ENCODE measurements at regions of chr1 and their contacts with region 1.

Region 1: GRCh38 chr1:211680752-211681327 is 5.4 kb upstream of the NEK2 start:
- DNase-seq: peak; percentile 45 to 93 (median 74)
- ATAC-seq: peak; percentile 93
- H3K4me3 ChIP-seq: no peak overlapping the region
- H3K4me3 Mint-ChIP-seq: no peak overlapping the region
- H3K27ac ChIP-seq: peak overlapping the region; percentile 18 to 85
- H3K27ac Mint-ChIP-seq: peak overlapping the region; percentile 94
- H3K4me1 ChIP-seq: peaks cover 8% of the 10 kb centered on the region
- H3K4me1 Mint-ChIP-seq: peaks cover 19% of the 10 kb centered on the region
- H3K27me3 ChIP-seq: no peaks in the 10 kb centered on the region
- H3K27me3 Mint-ChIP-seq: no peaks in the 10 kb centered on the region
- CTCF ChIP-seq: peak; percentile 88

Region 2: GRCh38 chr1:211698161-211699026 is 17.6 kb after region 1 on chr1:
- CTCF ChIA-PET with region 1: interaction called, 65 read pairs
- POLR2A ChIA-PET with region 1: interaction called, 8 read pairs
- intact Hi-C with region 1: loop called (anchors 1 to 2 kb)
- DNase-seq: peak; percentile 70 to 90 (median 82)
- ATAC-seq: peak; percentile 96
- H3K4me3 ChIP-seq: peak overlapping the region; percentile 18 to 34
- H3K4me3 Mint-ChIP-seq: peak overlapping the region; percentile 76
- H3K27ac ChIP-seq: no peak overlapping the region
- H3K27ac Mint-ChIP-seq: no peak overlapping the region
- H3K4me1 ChIP-seq: peaks cover 30% of the 10 kb centered on the region
- H3K4me1 Mint-ChIP-seq: peaks cover 42% of the 10 kb centered on the region
- H3K27me3 ChIP-seq: no peaks in the 10 kb centered on the region
- H3K27me3 Mint-ChIP-seq: no peaks in the 10 kb centered on the region
- CTCF ChIP-seq: peak; percentile 99

Region 3: DNA sequence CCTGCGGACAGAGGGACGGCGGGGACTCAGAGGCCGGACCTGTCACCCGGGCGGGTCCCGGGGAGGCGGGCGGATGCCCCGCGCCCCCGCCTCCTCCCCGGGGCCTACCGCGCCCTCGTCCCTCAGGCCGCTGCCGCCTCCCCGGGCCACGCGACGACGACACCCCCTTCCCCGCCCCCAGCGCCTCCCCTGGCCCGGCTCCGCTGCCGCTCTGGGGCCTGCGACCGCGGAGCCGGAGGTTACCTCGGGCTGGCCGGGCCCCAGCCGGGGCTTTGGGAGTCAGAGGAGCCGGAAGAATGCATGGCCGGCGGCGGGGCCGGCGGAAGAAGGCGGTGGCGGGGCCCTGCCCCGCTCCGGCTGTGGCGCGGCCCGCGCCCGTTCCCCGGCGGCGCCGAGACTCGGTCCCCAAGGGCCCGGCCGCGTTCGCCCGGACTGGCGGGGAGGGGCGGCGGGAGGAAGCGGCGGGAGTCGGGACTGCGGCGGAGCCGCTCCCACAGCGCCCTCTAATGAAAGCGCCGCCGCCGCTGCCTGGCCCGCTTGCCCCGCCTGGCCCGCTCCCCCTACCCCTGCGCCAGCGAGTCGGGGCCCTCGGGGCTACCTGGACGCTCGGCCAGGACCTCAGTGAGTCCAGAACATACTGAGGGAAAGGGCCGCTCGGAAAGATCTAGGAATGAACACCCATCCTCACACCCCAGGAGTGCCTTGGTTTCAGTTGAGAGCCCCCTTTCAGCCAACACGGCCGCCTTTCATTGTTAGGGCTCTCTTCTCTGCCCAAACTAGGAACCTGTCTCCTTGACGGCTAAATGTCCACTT is 149.7 kb after region 1 on chr1 and contains the start of gene LPGAT1:
- CTCF ChIA-PET with region 1: interaction called, 5 read pairs
- POLR2A ChIA-PET with region 1: no interaction called
- intact Hi-C with region 1: loop called (anchors 1 to 5 kb)
- DNase-seq: peak; percentile 37 to 84 (median 71)
- ATAC-seq: peak; percentile 79
- H3K4me3 ChIP-seq: peak within 1 kb of the TSS; percentile 69 to 75
- H3K4me3 Mint-ChIP-seq: peak within 1 kb of the TSS; percentile 90
- H3K27ac ChIP-seq: peak within 1 kb of the TSS; percentile 50 to 78
- H3K27ac Mint-ChIP-seq: peak within 1 kb of the TSS; percentile 92
- H3K4me1 ChIP-seq: peaks cover 44% of the 10 kb centered on the region
- H3K4me1 Mint-ChIP-seq: peaks cover 64% of the 10 kb centered on the region
- H3K27me3 ChIP-seq: no peaks in the 10 kb centered on the region
- H3K27me3 Mint-ChIP-seq: no peaks in the 10 kb centered on the region
- CTCF ChIP-seq: peak; percentile 51
- total RNA-seq, gene LPGAT1: 17.9 to 19.1 TPM

Region 4: GRCh38 chr1:212012034-212012740 is 331.3 kb after region 1 on chr1:
- CTCF ChIA-PET with region 1: interaction called, 14 read pairs
- POLR2A ChIA-PET with region 1: no interaction called
- intact Hi-C with region 1: loop called (anchors 1 kb)
- DNase-seq: peak; percentile 24 to 78 (median 61)
- ATAC-seq: peak; percentile 100
- H3K4me3 ChIP-seq: no peak overlapping the region
- H3K4me3 Mint-ChIP-seq: no peak overlapping the region
- H3K27ac ChIP-seq: no peak overlapping the region
- H3K27ac Mint-ChIP-seq: no peak overlapping the region
- H3K4me1 ChIP-seq: no peaks in the 10 kb centered on the region
- H3K4me1 Mint-ChIP-seq: peaks cover 2% of the 10 kb centered on the region
- H3K27me3 ChIP-seq: no peaks in the 10 kb centered on the region
- H3K27me3 Mint-ChIP-seq: no peaks in the 10 kb centered on the region
- CTCF ChIP-seq: peak; percentile 98

Region 5: GRCh38 chr1:212062832-212063438 is 382.1 kb after region 1 on chr1:
- CTCF ChIA-PET with region 1: interaction called, 10 read pairs
- POLR2A ChIA-PET with region 1: interaction called, 3 read pairs
- intact Hi-C with region 1: no loop called
- DNase-seq: peak in 2 of 9 experiments; percentile 39 to 59
- ATAC-seq: peak; percentile 62
- H3K4me3 ChIP-seq: no peak overlapping the region
- H3K4me3 Mint-ChIP-seq: no peak overlapping the region
- H3K27ac ChIP-seq: no peak overlapping the region
- H3K27ac Mint-ChIP-seq: no peak overlapping the region
- H3K4me1 ChIP-seq: no peaks in the 10 kb centered on the region
- H3K4me1 Mint-ChIP-seq: no peaks in the 10 kb centered on the region
- H3K27me3 ChIP-seq: no peaks in the 10 kb centered on the region
- H3K27me3 Mint-ChIP-seq: no peaks in the 10 kb centered on the region
- CTCF ChIP-seq: peak; percentile 74

Region 6: GRCh38 chr1:212291505-212292134 is 610.8 kb after region 1 on chr1:
- CTCF ChIA-PET with region 1: interaction called, 5 read pairs
- POLR2A ChIA-PET with region 1: interaction called, 8 read pairs
- intact Hi-C with region 1: loop called (anchors 2 to 5 kb)
- DNase-seq: peak in 2 of 9 experiments; percentile 71 to 81
- ATAC-seq: peak; percentile 73
- H3K4me3 ChIP-seq: no peak overlapping the region
- H3K4me3 Mint-ChIP-seq: peak overlapping the region; percentile 38
- H3K27ac ChIP-seq: no peak overlapping the region
- H3K27ac Mint-ChIP-seq: peak overlapping the region; percentile 16
- H3K4me1 ChIP-seq: peaks cover 63% of the 10 kb centered on the region
- H3K4me1 Mint-ChIP-seq: peaks cover 87% of the 10 kb centered on the region
- H3K27me3 ChIP-seq: no peaks in the 10 kb centered on the region
- H3K27me3 Mint-ChIP-seq: no peaks in the 10 kb centered on the region
- CTCF ChIP-seq: peak; percentile 73

Region 7: GRCh38 chr1:212368073-212368484 is 687.2 kb after region 1 on chr1:
- CTCF ChIA-PET with region 1: interaction called, 5 read pairs
- POLR2A ChIA-PET with region 1: no interaction called
- intact Hi-C with region 1: loop called (anchors 2 to 5 kb)
- DNase-seq: peak; percentile 16 to 78 (median 53)
- ATAC-seq: peak; percentile 92
- H3K4me3 ChIP-seq: no peak overlapping the region
- H3K4me3 Mint-ChIP-seq: no peak overlapping the region
- H3K27ac ChIP-seq: no peak overlapping the region
- H3K27ac Mint-ChIP-seq: peak overlapping the region; percentile 20
- H3K4me1 ChIP-seq: no peaks in the 10 kb centered on the region
- H3K4me1 Mint-ChIP-seq: no peaks in the 10 kb centered on the region
- H3K27me3 ChIP-seq: no peaks in the 10 kb centered on the region
- H3K27me3 Mint-ChIP-seq: no peaks in the 10 kb centered on the region
- CTCF ChIP-seq: peak; percentile 79

Measured in CD8-positive, alpha-beta T cell (primary cell).